ENCODE measurements at regions of chr6 and their contacts with region 1.

Region 1: DNA sequence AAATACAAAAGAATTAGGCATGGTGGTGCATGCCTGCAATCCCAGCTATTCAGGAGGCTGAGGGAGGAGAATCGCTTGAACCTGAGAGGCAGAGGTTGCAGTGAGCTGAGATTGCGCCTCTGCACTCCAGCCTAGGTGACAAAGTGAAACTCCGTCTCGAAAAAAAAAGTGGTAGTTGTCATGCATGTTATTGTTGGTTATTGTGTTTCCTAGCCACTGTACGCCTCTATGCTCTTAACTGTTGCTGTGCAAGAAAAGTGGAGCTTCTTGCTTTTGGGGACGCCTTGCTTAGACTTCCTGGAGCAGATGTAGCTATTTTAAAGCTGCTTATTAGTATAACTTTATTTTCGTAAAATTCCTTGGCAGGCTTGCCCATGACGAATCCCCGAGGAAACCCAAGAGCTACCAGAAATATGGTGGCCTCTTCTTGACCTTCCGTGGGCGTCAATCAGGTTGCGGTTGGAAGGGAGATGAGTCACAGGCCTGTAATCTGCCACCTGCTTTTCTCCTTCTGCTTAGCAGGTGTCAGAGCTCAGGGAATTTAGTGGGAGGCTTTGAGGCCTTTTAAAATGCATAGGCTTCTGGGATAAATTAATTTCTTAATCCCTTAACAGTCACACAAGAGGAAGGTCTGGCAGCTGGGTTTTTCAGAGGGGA is 17.3 kb downstream of the GABRR2 start:
- DNase-seq: peak; percentile 86
- ATAC-seq: peak; percentile 80
- H3K4me3 Mint-ChIP-seq: peak overlapping the region; percentile 60
- H3K27ac Mint-ChIP-seq: peak overlapping the region; percentile 82
- H3K4me1 Mint-ChIP-seq: peaks cover 19% of the 10 kb centered on the region
- H3K27me3 Mint-ChIP-seq: no peaks in the 10 kb centered on the region
- CTCF ChIP-seq: no peak

Region 2: GRCh38 chr6:89352278-89353117 is 54.7 kb after region 1 on chr6 and contains the start of gene UBE2J1:
- CTCF ChIA-PET with region 1: interaction called, 5 read pairs
- POLR2A ChIA-PET with region 1: interaction called, 4 read pairs
- intact Hi-C with region 1: loop called (anchors 5 kb)
- DNase-seq: peak; percentile 82
- ATAC-seq: peak; percentile 83
- H3K4me3 Mint-ChIP-seq: peak within 1 kb of the TSS; percentile 98
- H3K27ac Mint-ChIP-seq: peak within 1 kb of the TSS; percentile 93
- H3K4me1 Mint-ChIP-seq: peaks cover 71% of the 10 kb centered on the region
- H3K27me3 Mint-ChIP-seq: no peaks in the 10 kb centered on the region
- CTCF ChIP-seq: no peak
- total RNA-seq, gene UBE2J1: 23.2 to 24.6 TPM

Measured in activated CD8-positive, alpha-beta T cell treated with anti-CD3 and anti-CD28 coated beads for 36 hours (primary cell).